ENCODE measurements at regions of chr1 and their contacts with region 1.

Region 1: DNA sequence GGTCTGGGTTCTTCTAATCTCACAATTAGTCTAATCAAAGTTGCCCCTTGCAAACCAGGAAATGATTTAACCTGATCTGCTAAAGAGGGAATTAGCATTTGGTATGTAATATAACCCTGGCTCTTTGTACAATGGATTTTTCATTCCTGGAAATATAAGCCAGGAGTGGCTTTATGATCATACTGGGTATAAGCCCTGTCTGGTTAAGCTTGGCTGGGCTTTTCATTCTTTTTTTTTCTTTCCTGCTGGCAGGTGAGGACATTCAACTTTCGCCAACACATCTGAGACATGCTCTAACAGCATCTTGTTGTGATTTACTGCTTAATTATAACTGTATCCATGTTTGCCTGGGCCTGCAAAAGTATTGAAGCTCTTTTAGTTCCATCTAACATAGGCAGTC is 20.4 kb upstream of the SDE2 start:
- DNase-seq: no peak
- H3K4me3 ChIP-seq: no peak overlapping the region
- H3K27ac ChIP-seq: no peak overlapping the region
- H3K4me1 ChIP-seq: no peaks in the 10 kb centered on the region
- H3K27me3 ChIP-seq: no peaks in the 10 kb centered on the region
- CTCF ChIP-seq: no peak
- POLR2A ChIP-seq: no peak

Region 2: GRCh38 chr1:225999227-225999911 is 20.2 kb before region 1 on chr1 and contains the start of gene SDE2:
- intact Hi-C with region 1: no loop called
- DNase-seq: peak; percentile 99
- H3K4me3 ChIP-seq: peak within 1 kb of the TSS; percentile 65 to 89 (median 82)
- H3K27ac ChIP-seq: peak within 1 kb of the TSS; percentile 94 to 99
- H3K4me1 ChIP-seq: peaks cover 4 to 8% of the 10 kb centered on the region in 2 donors
- H3K27me3 ChIP-seq: no peaks in the 10 kb centered on the region
- CTCF ChIP-seq: peak in 1 of 3 donors; percentile 9
- POLR2A ChIP-seq: peak; percentile 63
- total RNA-seq, gene SDE2: 17.6 to 25.3 (median 22.0) TPM

Region 3: GRCh38 chr1:226047495-226047894 is 27.9 kb after region 1 on chr1:
- intact Hi-C with region 1: loop called (anchors 1 kb)
- DNase-seq: no peak
- H3K4me3 ChIP-seq: no peak overlapping the region
- H3K27ac ChIP-seq: no peak overlapping the region
- H3K4me1 ChIP-seq: no peaks in the 10 kb centered on the region
- H3K27me3 ChIP-seq: no peaks in the 10 kb centered on the region
- CTCF ChIP-seq: no peak
- POLR2A ChIP-seq: no peak

Region 4: DNA sequence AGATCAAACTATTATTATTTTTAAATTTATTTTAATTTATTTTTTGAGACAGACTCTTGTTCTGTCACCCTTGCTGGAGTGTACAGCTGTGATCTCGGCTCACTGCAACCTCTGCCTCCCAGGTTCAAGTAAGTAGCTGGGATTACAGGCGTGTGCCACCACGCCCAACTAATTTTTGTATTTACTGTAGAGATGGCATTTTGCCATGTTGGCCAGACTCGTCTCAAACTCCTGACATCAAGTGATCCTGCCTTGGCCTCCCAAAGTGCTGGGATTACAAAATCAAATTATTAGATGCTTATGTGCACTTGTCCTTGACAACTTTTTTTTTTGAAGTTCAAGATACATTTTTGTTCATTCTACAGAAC is 274.0 kb after region 1 on chr1:
- intact Hi-C with region 1: no loop called
- DNase-seq: no peak
- H3K4me3 ChIP-seq: no peak overlapping the region
- H3K27ac ChIP-seq: no peak overlapping the region
- H3K4me1 ChIP-seq: no peaks in the 10 kb centered on the region
- H3K27me3 ChIP-seq: no peaks in the 10 kb centered on the region
- CTCF ChIP-seq: no peak
- POLR2A ChIP-seq: no peak